Activated T-helper 1 cell treated with anti-CD3 and anti-CD28 coated beads, Interleukin-12 subunit alpha, Interleukin-12 subunit beta, Interleukin-2, Interleukin-4 antibody, amounts not matched to agents 30 ng/mL and 10 ng/mL and 1 ng/mL, durations not matched to agents 14 hours and 24 hours and 36 hours (primary cell): ENCODE measurements at regions of chr2 and their contacts with region 1.

Region 1: GRCh38 chr2:112048887-112049286 is 6.2 kb upstream of the TMEM87B start:
- DNase-seq: no peak
- H3K4me3 Mint-ChIP-seq: no peak overlapping the region
- H3K27ac Mint-ChIP-seq: no peak overlapping the region
- H3K4me1 Mint-ChIP-seq: peaks cover 7% of the 10 kb centered on the region
- H3K27me3 Mint-ChIP-seq: peaks cover 8% of the 10 kb centered on the region

Region 2: DNA sequence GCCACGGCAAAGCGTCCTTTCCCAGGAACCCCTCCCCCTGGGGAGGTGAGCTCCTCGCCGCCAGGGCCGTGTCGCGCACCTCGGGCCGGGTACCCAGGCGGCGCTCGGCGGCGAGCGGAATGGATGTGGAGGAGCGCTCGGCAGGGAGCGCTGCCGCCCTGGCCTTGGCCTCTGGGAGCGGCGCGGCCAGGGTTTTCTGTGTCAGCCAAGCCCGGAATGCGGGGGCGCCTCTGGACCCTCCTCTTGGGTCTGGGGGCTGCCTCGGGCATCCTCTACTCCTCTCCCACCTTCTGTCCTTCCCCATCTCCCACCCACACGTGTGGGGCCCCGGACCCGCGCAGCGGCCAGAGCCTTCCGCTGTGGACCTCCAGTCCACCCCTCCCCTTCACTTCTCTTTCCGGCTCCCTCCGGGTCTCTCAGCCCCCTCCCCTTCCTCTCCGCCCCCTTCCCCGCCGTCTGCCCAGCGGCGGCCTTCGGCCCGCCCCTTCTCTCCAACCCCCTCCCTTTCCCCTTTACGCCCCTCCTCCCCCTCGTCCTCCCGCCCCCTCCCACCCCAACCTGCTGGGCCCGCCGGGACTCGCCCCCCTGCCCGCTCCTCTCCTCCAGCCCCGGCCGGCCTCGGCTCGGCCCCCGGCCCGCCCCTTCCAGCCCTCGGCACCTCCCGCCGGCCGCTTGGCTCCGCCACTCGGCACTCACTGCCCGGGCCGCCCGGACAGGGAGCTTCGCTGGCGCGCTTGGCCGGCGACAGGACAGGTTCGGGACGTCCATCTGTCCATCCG is 150.8 kb before region 1 on chr2 and contains the start of gene MERTK:
- intact Hi-C with region 1: loop called (anchors 1 kb)
- DNase-seq: peak; percentile 27
- H3K4me3 Mint-ChIP-seq: peak within 1 kb of the TSS; percentile 80
- H3K27ac Mint-ChIP-seq: no peak within 1 kb of the TSS
- H3K4me1 Mint-ChIP-seq: peaks cover 17% of the 10 kb centered on the region
- H3K27me3 Mint-ChIP-seq: peaks cover 41% of the 10 kb centered on the region
- total RNA-seq, gene MERTK: 1.3 and 1.9 TPM in 2 replicates